Left cardiac atrium (tissue), 4 donors: ENCODE measurements at regions of chr5 and their contacts with region 1.

Region 1: GRCh38 chr5:81425569-81425968 is 31.6 kb upstream of the ACOT12 start:
- DNase-seq: no peak
- ATAC-seq: peak; percentile 47 to 48

Region 2: DNA sequence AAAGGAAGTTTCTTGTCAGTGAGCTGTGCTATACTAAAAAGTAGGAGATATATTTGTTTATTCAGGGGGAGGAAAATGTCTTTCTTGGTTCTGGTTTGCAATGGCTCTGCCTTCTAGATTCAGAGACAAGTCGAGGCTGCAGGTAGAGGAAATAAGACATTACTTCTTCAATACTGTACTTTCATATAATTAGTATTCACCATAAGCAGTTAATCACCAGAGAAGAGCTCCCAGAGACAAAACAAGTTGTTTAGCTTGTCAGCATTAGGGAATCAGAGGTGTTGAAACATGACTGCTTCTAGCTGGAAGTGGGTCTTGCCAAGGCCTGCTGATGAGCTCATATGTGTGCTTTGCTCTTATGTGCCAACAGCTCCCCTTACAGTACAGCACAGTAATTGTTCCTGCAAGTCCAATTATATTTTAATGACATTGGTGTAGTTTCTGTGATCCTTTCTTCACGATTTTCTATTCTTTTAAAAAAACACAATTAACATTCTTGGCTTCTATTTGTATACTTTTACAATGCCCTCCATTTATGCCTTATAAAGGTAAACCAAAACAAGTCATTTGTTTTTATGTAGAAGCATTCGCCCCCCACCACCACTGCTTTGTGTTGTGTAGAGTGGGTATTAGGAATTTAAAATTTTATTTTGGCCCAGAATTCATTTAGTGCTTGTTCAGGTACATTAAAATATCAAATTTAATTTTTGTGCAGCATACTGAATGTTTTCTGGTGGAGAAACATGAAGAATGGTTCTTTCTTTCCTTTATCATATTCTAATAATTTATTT is 740.4 kb after region 1 on chr5:
- intact Hi-C with region 1: loop called (anchors 1 to 10 kb)
- DNase-seq: peak; percentile 73
- ATAC-seq: peak; percentile 99 to 100

Region 3: DNA sequence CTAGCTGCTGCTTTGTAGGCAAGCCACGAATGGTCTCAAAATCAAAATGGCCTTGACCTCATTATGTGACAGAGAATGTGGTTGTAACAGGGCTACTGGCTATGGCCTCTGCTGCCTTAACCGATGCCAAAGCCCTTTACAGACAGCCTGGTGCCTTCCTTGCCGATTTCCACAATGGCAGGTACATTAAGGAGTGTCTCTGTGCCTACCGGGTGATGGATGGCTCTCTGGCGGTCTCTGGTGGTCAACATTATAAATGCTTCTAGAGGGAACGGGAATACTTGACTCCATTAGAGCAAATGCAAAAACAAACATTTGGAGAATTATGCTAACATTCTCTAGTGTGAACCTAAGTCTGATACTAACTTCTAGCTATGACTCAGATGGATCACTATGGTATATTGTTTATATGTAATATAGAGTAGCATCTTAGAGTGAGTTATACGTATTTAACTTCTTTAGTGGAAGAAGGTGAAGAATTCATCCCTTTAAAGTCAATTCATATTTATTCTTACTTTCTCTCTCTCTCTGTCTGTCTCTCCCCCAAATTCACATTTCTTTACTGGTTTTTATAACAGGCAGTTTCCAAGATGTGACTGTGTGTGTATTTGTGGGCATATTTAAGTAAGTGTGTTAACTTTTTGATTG is 800.1 kb after region 1 on chr5:
- intact Hi-C with region 1: loop called in 1 of 2 experiments (anchors 2 kb)
- DNase-seq: peak; percentile 44
- ATAC-seq: peak; percentile 65 to 85